ENCODE measurements at regions of chr5 and their contacts with region 1.

Region 1: DNA sequence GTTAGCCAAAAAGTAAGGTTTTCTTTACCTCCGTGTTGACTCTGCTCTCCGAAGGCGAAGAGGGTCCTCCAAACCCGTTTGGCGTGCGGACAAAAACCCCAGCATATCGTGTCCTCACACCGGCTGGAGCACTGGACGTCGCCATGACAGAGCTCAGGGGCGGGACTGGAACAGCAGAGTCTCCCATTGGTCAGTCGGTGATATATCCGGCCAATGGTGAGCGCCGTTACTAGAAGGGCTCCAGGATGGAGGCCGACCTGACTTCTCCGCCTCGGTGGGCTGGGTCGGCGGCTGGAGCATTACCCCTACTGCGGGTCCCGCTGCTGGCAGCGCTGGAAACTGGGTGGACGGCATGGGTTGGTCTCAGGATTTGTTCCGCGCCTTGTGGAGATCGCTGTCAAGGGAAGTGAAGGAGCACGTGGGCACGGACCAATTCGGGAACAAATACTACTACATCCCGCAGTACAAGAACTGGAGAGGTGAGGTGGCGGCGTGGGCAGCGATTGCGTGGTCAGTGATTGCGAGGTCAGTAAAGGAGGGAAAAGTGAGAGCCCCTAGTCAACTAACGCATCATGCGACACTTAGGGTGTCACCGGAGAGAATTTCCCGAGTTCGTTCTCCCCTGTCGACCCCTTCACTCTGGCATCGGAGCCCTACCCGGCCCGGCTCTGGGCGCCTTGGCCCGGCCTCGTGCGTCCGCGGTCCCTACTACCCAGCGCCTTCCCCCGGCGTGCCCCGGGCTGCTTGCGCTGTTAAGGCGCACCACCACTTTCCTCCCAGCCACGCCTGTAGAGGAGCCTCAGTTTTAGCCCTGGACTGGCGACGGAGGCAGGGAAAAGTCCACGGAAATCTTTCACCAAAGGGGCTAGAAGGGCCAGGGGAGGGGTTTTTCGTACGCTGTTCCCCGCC is at the starts of genes ERCC8 and NDUFAF2:
- DNase-seq: peak; percentile 72 to 90 (median 87)
- ATAC-seq: peak; percentile 99
- H3K4me3 ChIP-seq: peak within 1 kb of the TSS; percentile 86
- H3K4me3 Mint-ChIP-seq: no peak within 1 kb of the TSS
- H3K27ac ChIP-seq: peak within 1 kb of the TSS; percentile 69
- H3K27ac Mint-ChIP-seq: peak within 1 kb of the TSS in 2 of 9 donors; percentile 87 to 91
- H3K4me1 ChIP-seq: peaks cover 0 to 6% of the 10 kb centered on the region in 2 donors
- H3K4me1 Mint-ChIP-seq: peaks cover 16 to 40% (median 23%) of the 10 kb centered on the region in 7 donors
- H3K27me3 ChIP-seq: no peaks in the 10 kb centered on the region
- H3K27me3 Mint-ChIP-seq: no peaks in the 10 kb centered on the region
- total RNA-seq, gene ERCC8: 4.9 to 9.0 (median 8.0) TPM
- total RNA-seq, gene NDUFAF2: 7.0 to 19.4 (median 11.3) TPM

Region 2: DNA sequence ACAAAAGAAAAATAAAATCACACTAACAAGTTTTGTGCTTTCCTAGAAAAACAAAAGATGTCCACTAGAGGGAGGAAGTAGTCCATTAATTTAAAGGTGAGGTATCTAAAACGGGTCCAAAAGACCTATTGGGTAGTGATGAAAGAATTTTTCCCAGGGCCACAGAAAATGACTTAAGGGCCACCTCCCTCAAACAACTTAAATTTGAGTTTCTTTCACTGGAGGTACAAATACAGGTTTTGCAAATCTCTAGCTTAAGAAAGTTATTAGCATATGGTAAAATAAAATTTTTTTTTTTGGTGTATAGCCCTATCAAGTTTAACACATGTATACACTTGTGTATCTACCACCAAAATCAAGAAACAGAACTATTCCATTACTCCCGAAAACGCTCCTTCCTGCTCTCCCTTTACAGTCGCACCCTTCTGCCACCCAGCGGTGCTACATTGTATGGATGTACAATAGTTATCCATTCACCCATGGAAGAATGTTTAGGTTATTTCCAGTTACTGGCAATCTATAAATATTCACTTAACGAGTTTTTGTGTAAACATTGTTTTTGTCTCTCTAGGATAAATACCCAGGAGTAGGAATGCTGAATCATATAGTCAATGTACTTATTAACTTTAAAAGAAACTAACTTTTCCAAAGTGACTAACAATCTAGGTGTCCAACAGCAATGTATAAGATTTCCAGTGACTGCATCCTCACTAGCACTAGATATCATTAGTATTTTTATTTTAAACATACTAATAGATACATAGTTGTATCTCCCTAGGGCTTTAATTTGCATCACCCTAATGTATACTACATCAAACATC is 267.1 kb before region 1 on chr5:
- CTCF ChIA-PET with region 1: no interaction called
- POLR2A ChIA-PET with region 1: no interaction called
- intact Hi-C with region 1: loop called in 1 of 2 experiments (anchors 1 kb)
- DNase-seq: peak in 2 of 9 donors; percentile 11 to 13
- ATAC-seq: peak; percentile 63
- H3K4me3 ChIP-seq: no peak overlapping the region
- H3K4me3 Mint-ChIP-seq: no peak overlapping the region
- H3K27ac ChIP-seq: no peak overlapping the region
- H3K27ac Mint-ChIP-seq: no peak overlapping the region
- H3K4me1 ChIP-seq: no peaks in the 10 kb centered on the region
- H3K4me1 Mint-ChIP-seq: peaks cover 0 to 20% (median 0%) of the 10 kb centered on the region in 7 donors
- H3K27me3 ChIP-seq: no peaks in the 10 kb centered on the region
- H3K27me3 Mint-ChIP-seq: no peaks in the 10 kb centered on the region

Region 3: GRCh38 chr5:60843936-60844905 is 100.9 kb before region 1 on chr5 and contains the start of gene ELOVL7:
- CTCF ChIA-PET with region 1: no interaction called
- POLR2A ChIA-PET with region 1: no interaction called
- intact Hi-C with region 1: loop called in 1 of 2 experiments (anchors 5 kb)
- DNase-seq: peak in 2 of 9 donors; percentile 11 to 68
- ATAC-seq: peak; percentile 72
- H3K4me3 ChIP-seq: no peak within 1 kb of the TSS
- H3K4me3 Mint-ChIP-seq: peak within 1 kb of the TSS; percentile 33 to 81 (median 69)
- H3K27ac ChIP-seq: no peak within 1 kb of the TSS
- H3K27ac Mint-ChIP-seq: no peak within 1 kb of the TSS
- H3K4me1 ChIP-seq: no peaks in the 10 kb centered on the region
- H3K4me1 Mint-ChIP-seq: peaks cover 0 to 15% (median 13%) of the 10 kb centered on the region in 7 donors
- H3K27me3 ChIP-seq: peaks cover 0 to 3% of the 10 kb centered on the region in 2 donors
- H3K27me3 Mint-ChIP-seq: peaks cover 51 to 66% (median 59%) of the 10 kb centered on the region in 5 donors
- total RNA-seq, gene ELOVL7: 0.29 to 2.2 (median 0.48) TPM in 3 of 5 experiments, not detected in the others

Region 4: DNA sequence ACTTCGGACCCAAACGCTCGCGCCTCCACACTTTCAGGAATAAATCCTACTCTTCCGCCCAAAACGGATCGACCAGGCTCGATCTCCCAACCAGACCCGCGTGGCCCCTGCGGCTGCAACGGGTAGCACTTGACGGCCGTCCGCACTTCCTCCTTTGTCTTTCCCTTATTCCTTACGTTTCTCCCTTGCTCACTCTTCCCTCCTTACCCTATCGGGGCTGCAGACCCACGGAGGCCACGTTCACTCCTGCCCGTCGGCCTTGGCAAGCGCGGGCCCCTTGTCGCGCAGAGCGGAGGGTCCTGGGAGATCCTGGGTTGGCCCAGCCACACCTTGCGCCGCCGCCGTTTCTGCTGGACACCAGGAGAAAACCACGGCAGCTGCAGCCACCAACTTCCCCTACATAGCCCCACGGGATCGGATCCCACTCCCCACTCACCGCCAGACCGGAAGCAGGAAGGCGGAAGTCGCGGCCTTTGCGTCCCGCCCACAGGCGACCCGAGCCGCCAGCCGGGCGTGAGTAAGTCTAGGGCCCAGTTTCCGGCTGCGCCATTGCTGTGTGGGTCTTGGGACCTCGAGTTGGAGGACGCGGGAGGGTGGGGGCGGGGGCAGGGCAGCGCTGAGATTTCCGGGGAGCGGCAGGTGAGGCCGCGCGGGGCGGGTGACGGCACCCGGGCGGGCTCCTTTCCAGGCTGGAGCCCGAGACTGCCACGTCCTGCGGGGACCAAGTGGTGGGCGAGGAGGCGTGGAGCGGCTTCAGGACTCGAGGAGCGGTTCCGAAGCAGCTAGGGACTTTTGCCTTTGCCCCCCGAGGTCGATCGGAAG is 217.1 kb after region 1 on chr5 and contains the start of gene SMIM15:
- CTCF ChIA-PET with region 1: no interaction called
- POLR2A ChIA-PET with region 1: no interaction called
- intact Hi-C with region 1: loop called (anchors 1 to 2 kb)
- DNase-seq: peak; percentile 59 to 85 (median 70)
- ATAC-seq: peak; percentile 93
- H3K4me3 ChIP-seq: peak within 1 kb of the TSS; percentile 87
- H3K4me3 Mint-ChIP-seq: peak within 1 kb of the TSS; percentile 92 to 98 (median 94)
- H3K27ac ChIP-seq: peak within 1 kb of the TSS; percentile 77
- H3K27ac Mint-ChIP-seq: peak within 1 kb of the TSS; percentile 80 to 98 (median 95)
- H3K4me1 ChIP-seq: peaks cover 8 to 16% of the 10 kb centered on the region in 2 donors
- H3K4me1 Mint-ChIP-seq: peaks cover 5 to 57% (median 46%) of the 10 kb centered on the region in 7 donors
- H3K27me3 ChIP-seq: no peaks in the 10 kb centered on the region
- H3K27me3 Mint-ChIP-seq: no peaks in the 10 kb centered on the region
- total RNA-seq, gene SMIM15: 17.3 to 49.0 (median 34.0) TPM

Region 5: DNA sequence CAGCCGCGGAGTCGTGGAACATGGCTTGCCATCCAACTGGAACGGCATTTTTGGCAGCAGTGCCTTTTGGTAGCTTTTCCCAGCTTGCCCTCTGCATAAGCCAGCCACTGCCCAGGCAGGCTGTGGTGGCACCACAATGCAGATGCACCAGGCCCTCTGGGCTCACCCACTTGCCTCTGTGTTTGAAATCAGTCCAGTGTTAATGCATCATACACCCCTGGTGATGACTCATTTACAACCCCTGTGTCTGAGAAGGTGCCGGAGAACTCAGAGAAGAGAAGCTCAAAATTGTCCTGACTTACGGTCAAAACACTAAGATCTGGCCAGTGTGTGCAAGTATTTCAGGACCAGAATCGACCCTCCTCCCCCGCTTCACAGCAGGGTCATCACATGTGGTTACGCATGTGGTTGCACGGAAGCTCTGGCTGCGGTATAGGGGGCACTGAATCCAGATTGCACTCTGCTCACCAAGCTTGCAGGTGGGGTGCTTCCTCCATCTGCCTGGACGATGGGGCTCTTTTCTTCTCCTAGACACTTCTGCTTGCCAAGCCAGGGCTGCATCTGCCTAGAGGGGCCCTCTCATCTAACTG is 283.6 kb after region 1 on chr5:
- CTCF ChIA-PET with region 1: no interaction called
- POLR2A ChIA-PET with region 1: no interaction called
- intact Hi-C with region 1: no loop called
- DNase-seq: no peak
- ATAC-seq: no peak
- H3K4me3 ChIP-seq: no peak overlapping the region
- H3K4me3 Mint-ChIP-seq: no peak overlapping the region
- H3K27ac ChIP-seq: no peak overlapping the region
- H3K27ac Mint-ChIP-seq: no peak overlapping the region
- H3K4me1 ChIP-seq: no peaks in the 10 kb centered on the region
- H3K4me1 Mint-ChIP-seq: peaks cover 0 to 4% (median 0%) of the 10 kb centered on the region in 7 donors
- H3K27me3 ChIP-seq: no peaks in the 10 kb centered on the region
- H3K27me3 Mint-ChIP-seq: peaks cover 0 to 7% (median 0%) of the 10 kb centered on the region in 5 donors

Region 6: DNA sequence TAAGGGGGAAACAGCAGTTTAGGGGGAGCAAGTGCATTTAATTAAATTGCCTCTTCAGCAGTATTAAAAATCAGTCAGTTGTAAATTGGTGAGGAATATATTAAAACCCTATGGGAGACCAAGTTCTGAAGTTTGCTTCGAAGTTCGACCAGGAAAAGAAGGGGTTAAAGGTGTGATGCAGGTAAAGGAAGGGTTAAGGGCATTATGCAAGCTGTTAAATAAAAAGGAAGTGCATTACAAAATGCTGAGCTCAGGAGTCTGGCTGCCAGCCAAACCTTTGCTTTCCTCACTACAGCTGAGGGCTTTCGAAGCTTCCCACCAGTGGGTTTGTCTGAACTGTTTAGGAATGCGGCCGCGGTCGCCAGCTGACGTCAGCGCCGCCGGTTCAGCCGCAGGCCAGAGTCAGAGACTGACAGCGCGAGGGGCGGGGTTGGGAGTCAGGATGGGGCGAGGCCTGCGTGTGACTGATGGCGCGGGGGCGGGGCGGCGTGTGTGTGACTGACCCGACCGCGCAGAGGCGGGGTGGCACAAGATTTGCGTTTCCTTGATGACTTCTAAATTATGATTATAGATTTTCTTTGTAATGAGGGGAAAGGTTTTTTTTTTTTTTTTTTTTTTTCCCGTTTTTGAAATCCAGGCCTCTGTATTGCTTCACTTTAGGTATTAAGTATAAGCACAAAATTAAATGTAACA is 463.5 kb after region 1 on chr5:
- CTCF ChIA-PET with region 1: no interaction called
- POLR2A ChIA-PET with region 1: no interaction called
- intact Hi-C with region 1: loop called (anchors 2 kb)
- DNase-seq: peak; percentile 92 to 98 (median 95)
- ATAC-seq: peak; percentile 98
- H3K4me3 ChIP-seq: peak overlapping the region; percentile 36
- H3K4me3 Mint-ChIP-seq: peak overlapping the region; percentile 74 to 94 (median 84)
- H3K27ac ChIP-seq: peak overlapping the region; percentile 32
- H3K27ac Mint-ChIP-seq: peak overlapping the region; percentile 59 to 98 (median 91)
- H3K4me1 ChIP-seq: peaks cover 12 to 14% of the 10 kb centered on the region in 2 donors
- H3K4me1 Mint-ChIP-seq: peaks cover 22 to 38% (median 32%) of the 10 kb centered on the region in 7 donors
- H3K27me3 ChIP-seq: no peaks in the 10 kb centered on the region
- H3K27me3 Mint-ChIP-seq: peaks cover 0 to 15% (median 0%) of the 10 kb centered on the region in 5 donors